ENCODE measurements at regions of chr12 and their contacts with region 1.

Region 1: DNA sequence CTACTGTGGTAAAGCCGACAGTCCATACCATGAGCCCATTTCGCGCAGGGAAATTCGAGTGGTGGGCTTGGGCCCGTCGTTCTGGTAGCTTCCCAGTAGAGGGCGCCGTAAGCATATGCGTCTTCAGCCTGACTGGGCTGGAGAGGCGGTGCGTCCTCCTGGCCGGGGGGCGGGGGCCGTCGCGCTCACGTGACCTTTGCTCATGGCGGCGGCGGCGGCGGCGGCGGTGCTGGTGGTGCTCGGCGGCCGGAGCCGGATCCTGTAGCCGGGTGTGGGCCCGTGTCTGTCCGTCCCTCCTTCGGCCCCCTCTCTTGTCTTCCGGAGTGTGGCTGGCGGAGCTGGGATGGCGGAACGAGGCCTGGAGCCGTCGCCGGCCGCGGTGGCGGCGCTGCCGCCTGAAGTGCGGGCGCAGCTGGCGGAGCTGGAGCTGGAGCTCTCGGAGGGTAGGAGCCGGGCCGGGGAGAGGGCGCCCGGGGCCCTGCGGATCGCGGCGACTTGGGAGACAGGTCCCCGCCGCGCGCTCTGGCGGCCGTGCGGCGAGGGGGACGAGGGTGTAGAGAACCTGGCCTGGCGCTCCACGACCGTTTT is at the start of gene DIP2B:
- DNase-seq: peak; percentile 93 to 94 (median 94)
- H3K4me3 ChIP-seq: peak within 1 kb of the TSS; percentile 82 to 91
- H3K4me3 Mint-ChIP-seq: peak within 1 kb of the TSS; percentile 94 to 98 (median 97)
- H3K27ac ChIP-seq: peak within 1 kb of the TSS; percentile 84
- H3K27ac Mint-ChIP-seq: peak within 1 kb of the TSS; percentile 89 to 97 (median 95)
- H3K4me1 ChIP-seq: peaks cover 48% of the 10 kb centered on the region
- H3K4me1 Mint-ChIP-seq: peaks cover 38 to 52% (median 44%) of the 10 kb centered on the region in 4 donors
- H3K27me3 ChIP-seq: no peaks in the 10 kb centered on the region
- H3K27me3 Mint-ChIP-seq: no peaks in the 10 kb centered on the region
- total RNA-seq, gene DIP2B: 26.4 to 29.1 TPM

Region 2: GRCh38 chr12:50517456-50518048 is 12.7 kb after region 1 on chr12:
- CTCF ChIA-PET with region 1: interaction called, 9 read pairs
- POLR2A ChIA-PET with region 1: interaction called, 24 read pairs
- intact Hi-C with region 1: loop called (anchors 2 kb)
- DNase-seq: peak in 3 of 5 donors; percentile 15 to 31 (median 20)
- H3K4me3 ChIP-seq: no peak overlapping the region
- H3K4me3 Mint-ChIP-seq: no peak overlapping the region
- H3K27ac ChIP-seq: peak overlapping the region; percentile 33
- H3K27ac Mint-ChIP-seq: no peak overlapping the region
- H3K4me1 ChIP-seq: peaks cover 87% of the 10 kb centered on the region
- H3K4me1 Mint-ChIP-seq: peaks cover 37 to 67% (median 50%) of the 10 kb centered on the region in 4 donors
- H3K27me3 ChIP-seq: no peaks in the 10 kb centered on the region
- H3K27me3 Mint-ChIP-seq: no peaks in the 10 kb centered on the region

Region 3: DNA sequence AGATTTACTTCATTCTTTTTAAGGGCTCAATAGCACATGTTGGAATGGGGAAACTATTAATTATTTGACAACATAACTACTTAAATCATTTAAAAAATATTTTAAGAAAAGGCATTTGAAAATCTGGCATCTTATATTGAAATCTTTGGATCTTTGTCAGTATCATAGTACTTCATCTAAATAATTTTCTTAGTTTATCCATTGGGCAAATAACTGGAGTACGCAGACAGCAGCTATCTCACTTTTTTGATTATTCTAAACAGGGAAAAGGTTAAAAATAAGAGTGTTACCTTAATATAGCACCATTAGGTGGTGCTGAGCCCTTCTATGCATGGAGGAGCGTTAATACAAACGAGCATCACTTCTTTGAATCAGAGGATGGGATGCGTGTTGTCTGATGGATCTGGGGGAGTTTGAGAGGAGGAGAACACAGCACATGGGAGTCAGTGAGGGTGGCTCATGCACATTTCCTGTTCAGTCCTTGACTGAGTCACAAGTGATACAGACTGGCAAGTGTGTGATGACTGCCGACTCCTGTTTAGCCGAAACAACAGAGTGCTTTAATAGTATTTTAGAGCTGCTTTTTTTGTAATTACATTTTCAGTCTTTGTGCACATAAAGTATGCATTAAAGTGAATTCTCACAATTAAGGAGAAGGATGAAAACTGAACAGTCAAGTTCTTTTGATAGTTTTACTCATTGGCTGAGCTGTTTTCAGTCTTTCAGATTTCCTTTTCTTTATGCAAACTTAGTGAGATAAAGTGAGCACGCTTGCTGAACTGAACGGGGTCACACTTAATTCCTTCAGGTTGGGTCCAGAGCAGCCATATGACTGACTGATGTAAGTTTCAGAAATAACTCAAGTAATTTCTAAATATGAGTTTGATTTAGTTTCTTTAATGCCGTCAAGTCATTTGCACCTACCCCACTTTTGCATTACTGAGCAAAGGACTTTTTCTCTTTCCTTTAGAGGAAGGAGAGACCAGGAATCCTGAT is 92.6 kb after region 1 on chr12:
- CTCF ChIA-PET with region 1: interaction called, 5 read pairs
- POLR2A ChIA-PET with region 1: interaction called, 5 read pairs
- intact Hi-C with region 1: loop called (anchors 2 kb)
- DNase-seq: peak; percentile 13 to 61 (median 19)
- H3K4me3 ChIP-seq: no peak overlapping the region
- H3K4me3 Mint-ChIP-seq: peak overlapping the region; percentile 1 to 57 (median 18)
- H3K27ac ChIP-seq: no peak overlapping the region
- H3K27ac Mint-ChIP-seq: peak overlapping the region in 6 of 7 donors; percentile 0 to 53 (median 6)
- H3K4me1 ChIP-seq: peaks cover 22% of the 10 kb centered on the region
- H3K4me1 Mint-ChIP-seq: peaks cover 33 to 58% (median 41%) of the 10 kb centered on the region in 4 donors
- H3K27me3 ChIP-seq: no peaks in the 10 kb centered on the region
- H3K27me3 Mint-ChIP-seq: no peaks in the 10 kb centered on the region

Region 4: DNA sequence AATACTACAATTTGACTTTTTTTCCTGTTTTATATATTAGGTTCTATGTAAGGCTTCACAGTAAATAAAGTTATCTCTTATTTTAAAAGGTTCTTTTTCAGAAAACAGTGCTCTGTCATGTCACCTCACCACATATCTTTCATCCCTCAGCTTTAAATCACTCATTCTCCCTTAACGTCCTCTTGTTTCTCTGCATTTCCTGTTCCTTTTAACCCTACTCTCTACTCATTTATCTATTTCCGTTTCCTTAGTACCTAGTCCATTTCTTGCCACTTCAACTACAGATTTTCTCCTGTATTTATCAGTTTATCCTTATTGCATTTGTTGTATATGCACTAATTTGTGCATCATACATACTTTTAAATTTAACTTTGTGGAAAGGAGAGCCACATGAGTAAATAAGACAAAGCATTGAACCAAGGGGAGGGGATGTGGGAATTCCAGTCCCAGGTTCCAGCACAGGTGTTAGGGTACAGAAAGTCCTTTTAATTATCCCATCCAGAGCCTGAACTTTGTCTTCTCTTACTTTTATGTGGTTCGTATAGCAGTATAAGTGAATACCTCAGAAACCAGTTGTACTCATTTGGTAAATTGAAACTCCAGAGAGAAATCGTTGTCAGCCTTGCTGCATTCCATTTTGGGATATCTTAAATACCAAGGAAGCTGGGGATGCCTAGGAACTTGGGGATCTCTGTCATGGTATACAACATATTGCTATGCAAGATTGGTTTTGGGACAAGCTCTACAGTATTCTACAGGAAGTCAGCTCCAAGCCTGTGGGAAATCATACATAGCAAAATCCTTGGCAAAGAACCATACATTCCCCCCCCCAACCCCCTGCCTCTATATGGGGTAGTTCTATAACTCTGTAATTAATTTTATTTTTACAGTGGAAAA is 120.4 kb after region 1 on chr12:
- CTCF ChIA-PET with region 1: interaction called, 10 read pairs
- POLR2A ChIA-PET with region 1: interaction called, 6 read pairs
- intact Hi-C with region 1: no loop called
- DNase-seq: peak in 1 of 5 donors; percentile 20
- H3K4me3 ChIP-seq: no peak overlapping the region
- H3K4me3 Mint-ChIP-seq: peak overlapping the region in 7 of 8 donors; percentile 0 to 70 (median 48)
- H3K27ac ChIP-seq: no peak overlapping the region
- H3K27ac Mint-ChIP-seq: peak overlapping the region in 6 of 7 donors; percentile 4 to 66 (median 44)
- H3K4me1 ChIP-seq: peaks cover 40% of the 10 kb centered on the region
- H3K4me1 Mint-ChIP-seq: peaks cover 35 to 57% (median 43%) of the 10 kb centered on the region in 4 donors
- H3K27me3 ChIP-seq: no peaks in the 10 kb centered on the region
- H3K27me3 Mint-ChIP-seq: no peaks in the 10 kb centered on the region

Region 5: DNA sequence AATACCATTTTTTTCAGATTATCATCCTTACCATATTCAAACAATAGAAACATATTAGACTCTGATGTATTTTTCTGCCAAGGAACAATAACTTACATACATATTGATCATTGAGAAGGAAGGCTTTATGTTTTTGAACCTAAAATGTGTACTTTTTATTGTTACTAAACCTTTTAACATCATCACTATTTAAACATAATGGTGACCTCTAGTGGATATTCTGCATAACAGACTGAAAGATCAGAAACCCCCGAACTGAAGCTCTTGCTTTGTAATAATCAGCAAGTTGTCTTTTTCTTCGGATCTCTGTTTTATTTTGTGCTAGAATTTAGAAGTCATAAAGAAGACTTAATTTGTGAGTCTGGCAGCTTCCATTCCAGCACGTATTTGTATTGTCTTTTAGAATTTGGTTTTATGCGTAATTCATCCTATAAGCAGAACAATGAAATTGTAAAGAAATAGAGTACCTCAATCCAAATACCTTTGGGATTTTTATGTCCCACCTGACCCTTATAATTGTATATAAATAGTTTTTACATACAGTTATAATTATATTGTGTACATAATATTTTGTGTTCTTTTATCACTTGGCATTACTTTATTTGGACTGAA is 133.1 kb after region 1 on chr12:
- CTCF ChIA-PET with region 1: interaction called, 197 read pairs
- POLR2A ChIA-PET with region 1: interaction called, 26 read pairs
- intact Hi-C with region 1: loop called (anchors 1 kb)
- DNase-seq: peak in 4 of 5 donors; percentile 48 to 59 (median 52)
- H3K4me3 ChIP-seq: no peak overlapping the region
- H3K4me3 Mint-ChIP-seq: no peak overlapping the region
- H3K27ac ChIP-seq: no peak overlapping the region
- H3K27ac Mint-ChIP-seq: peak overlapping the region; percentile 21 to 83 (median 66)
- H3K4me1 ChIP-seq: peaks cover 8% of the 10 kb centered on the region
- H3K4me1 Mint-ChIP-seq: peaks cover 17 to 18% (median 18%) of the 10 kb centered on the region in 4 donors
- H3K27me3 ChIP-seq: no peaks in the 10 kb centered on the region
- H3K27me3 Mint-ChIP-seq: no peaks in the 10 kb centered on the region

Region 6: DNA sequence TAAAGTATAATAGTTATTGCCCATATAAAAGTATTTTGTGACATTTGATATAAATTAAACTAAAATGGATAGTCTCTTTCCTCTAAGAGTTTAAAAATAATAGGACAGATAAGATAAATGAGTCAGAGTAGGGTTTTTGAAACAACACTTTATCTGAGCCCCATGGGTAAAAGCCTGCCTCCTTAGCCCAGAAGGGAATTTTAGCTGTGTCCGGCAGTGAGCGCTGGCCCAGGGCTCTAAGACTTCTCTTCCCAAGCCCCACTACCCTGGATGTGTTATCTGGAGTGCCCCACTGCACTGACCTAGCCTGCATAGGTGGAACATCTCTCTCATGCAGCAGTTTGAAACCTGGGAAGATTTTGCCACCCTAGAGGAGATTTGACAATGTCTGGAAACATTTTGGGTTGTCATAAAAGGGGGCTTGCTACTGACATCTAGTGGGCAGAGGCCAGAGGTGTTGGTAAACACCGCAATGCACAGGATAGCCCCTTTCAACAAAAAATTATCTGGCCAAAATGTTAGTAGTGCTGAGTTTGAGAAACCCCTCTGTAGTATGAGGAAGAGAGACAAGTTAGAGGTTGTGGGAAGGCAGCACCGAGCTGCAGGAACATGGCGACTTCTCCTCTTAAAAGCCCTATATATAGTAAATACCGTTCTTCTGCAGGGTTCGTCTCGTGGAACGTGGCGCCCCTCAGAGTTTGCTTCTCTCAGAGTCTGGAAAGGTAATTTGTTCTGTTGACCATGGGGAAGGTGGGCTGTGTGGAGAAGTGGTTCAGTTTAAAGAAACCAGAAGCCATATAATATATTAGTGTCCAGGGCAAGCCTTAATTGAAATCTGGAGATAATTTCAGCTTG is 229.7 kb after region 1 on chr12:
- CTCF ChIA-PET with region 1: interaction called, 3 read pairs
- POLR2A ChIA-PET with region 1: interaction called, 3 read pairs
- intact Hi-C with region 1: loop called (anchors 1 kb)
- DNase-seq: peak in 2 of 5 donors; percentile 11 to 13
- H3K4me3 ChIP-seq: no peak overlapping the region
- H3K4me3 Mint-ChIP-seq: no peak overlapping the region
- H3K27ac ChIP-seq: no peak overlapping the region
- H3K27ac Mint-ChIP-seq: peak overlapping the region in 3 of 7 donors; percentile 13 to 75 (median 37)
- H3K4me1 ChIP-seq: no peaks in the 10 kb centered on the region
- H3K4me1 Mint-ChIP-seq: peaks cover 0 to 1% (median 0%) of the 10 kb centered on the region in 4 donors
- H3K27me3 ChIP-seq: no peaks in the 10 kb centered on the region
- H3K27me3 Mint-ChIP-seq: no peaks in the 10 kb centered on the region